Activated CD8-positive, alpha-beta T cell treated with anti-CD3 and anti-CD28 coated beads, Interleukin-2, amount 10 ng/mL, durations not matched to agents 7 days and 5 days (primary cell): ENCODE measurements at regions of chr1 and their contacts with region 1.

Region 1: DNA sequence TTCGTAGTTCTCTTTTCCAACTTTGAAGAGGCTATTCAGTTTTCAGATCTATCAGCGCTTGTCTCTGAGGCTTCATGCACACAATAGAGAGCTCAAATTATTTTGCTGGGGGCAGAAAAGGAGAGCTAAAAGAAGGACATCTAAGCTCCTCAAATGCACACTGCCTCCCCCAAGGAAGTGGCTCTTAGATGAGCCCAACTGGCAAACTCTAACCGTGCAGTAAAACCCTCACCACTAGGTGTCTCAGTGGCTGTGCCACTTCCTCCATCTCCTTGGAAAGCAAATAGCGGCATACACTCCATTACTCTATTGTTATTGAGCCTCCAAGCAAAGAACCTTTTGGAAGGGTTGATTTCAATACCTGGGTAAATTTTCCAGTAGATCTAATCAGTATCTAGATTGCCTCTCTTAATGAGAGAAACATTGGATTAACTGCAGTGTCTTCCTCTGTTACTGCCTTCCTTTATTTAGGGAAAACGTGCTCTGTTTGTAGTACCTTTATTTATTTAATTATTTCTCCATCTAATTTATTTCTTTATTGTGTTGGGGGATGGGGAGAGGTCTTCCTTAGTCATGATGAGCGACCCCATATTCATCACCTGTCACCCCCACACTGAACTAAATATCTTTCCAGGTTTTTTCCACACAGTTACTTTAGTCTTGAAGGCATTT is 9.2 kb upstream of the SFPQ start:
- DNase-seq: peak; percentile 84
- ATAC-seq: peak; percentile 99
- H3K4me3 Mint-ChIP-seq: no peak overlapping the region
- H3K27ac Mint-ChIP-seq: no peak overlapping the region
- H3K4me1 Mint-ChIP-seq: peaks cover 8% of the 10 kb centered on the region
- H3K27me3 Mint-ChIP-seq: peaks cover 9% of the 10 kb centered on the region

Region 2: GRCh38 chr1:35151220-35151619 is 51.0 kb before region 1 on chr1:
- CTCF ChIA-PET with region 1: no interaction called
- POLR2A ChIA-PET with region 1: no interaction called
- DNase-seq: no peak
- ATAC-seq: no peak
- H3K4me3 Mint-ChIP-seq: no peak overlapping the region
- H3K27ac Mint-ChIP-seq: no peak overlapping the region
- H3K4me1 Mint-ChIP-seq: peaks cover 5% of the 10 kb centered on the region
- H3K27me3 Mint-ChIP-seq: no peaks in the 10 kb centered on the region

Region 3: GRCh38 chr1:35220976-35221375 is 18.8 kb after region 1 on chr1:
- CTCF ChIA-PET with region 1: interaction called, 11 read pairs
- POLR2A ChIA-PET with region 1: no interaction called
- DNase-seq: peak; percentile 33
- ATAC-seq: peak; percentile 74
- H3K4me3 Mint-ChIP-seq: no peak overlapping the region
- H3K27ac Mint-ChIP-seq: no peak overlapping the region
- H3K4me1 Mint-ChIP-seq: no peaks in the 10 kb centered on the region
- H3K27me3 Mint-ChIP-seq: no peaks in the 10 kb centered on the region

Region 4: DNA sequence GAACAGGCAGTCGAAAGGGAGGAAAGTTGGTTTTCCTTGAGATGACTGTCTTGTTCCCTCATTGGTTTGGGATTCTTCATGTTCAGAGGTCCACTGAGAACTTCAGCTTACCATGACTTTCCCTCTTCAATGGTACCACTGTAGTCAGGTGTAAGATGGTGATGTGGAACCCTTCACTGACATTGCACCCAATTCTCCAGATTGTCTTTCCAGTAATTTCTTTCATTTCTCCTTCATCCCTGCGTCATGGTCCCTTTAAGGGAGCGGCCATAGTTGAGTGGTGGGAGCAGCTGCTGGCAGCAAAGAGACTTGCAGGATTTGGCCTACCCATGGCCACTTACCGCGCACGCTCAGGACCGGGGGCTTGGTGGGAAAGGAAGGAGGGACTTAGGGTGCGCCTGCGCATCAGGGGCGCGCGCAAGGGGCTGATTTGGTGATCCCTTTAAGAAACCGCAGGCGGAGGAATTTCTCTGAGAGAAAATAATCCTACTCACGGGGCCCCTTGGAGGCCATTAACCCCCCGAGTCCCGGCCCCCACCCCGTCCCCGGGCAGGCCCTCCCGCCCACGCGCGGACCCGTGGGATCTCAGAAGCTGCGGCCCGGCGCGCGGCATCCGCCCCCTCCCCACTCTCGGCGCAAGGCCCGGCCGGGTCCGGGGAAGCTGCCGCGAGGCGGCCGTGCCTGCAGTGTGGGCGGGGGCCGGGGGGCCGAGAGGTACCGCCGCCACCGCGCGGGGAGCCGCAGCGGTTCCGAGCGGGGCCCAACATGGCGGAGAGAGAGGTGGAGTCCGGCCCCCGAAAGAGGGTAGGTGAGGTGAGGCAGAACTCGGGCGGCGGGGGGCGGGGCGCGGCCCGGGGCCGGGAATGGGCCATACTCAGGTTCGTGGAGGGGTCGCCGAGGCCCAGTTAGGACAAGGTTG is 66.4 kb after region 1 on chr1 and contains the start of gene ZMYM4:
- CTCF ChIA-PET with region 1: interaction called, 10 read pairs
- POLR2A ChIA-PET with region 1: no interaction called
- DNase-seq: peak; percentile 93
- ATAC-seq: peak; percentile 97
- H3K4me3 Mint-ChIP-seq: peak within 1 kb of the TSS; percentile 82
- H3K27ac Mint-ChIP-seq: peak within 1 kb of the TSS; percentile 85
- H3K4me1 Mint-ChIP-seq: peaks cover 39% of the 10 kb centered on the region
- H3K27me3 Mint-ChIP-seq: peaks cover 5% of the 10 kb centered on the region
- total RNA-seq, gene ZMYM4: 29.5 to 29.6 TPM

Region 5: GRCh38 chr1:35298464-35298863 is 96.3 kb after region 1 on chr1:
- CTCF ChIA-PET with region 1: interaction called, 16 read pairs
- POLR2A ChIA-PET with region 1: no interaction called
- DNase-seq: peak; percentile 45
- ATAC-seq: peak; percentile 82
- H3K4me3 Mint-ChIP-seq: no peak overlapping the region
- H3K27ac Mint-ChIP-seq: peak overlapping the region; percentile 50
- H3K4me1 Mint-ChIP-seq: peaks cover 4% of the 10 kb centered on the region
- H3K27me3 Mint-ChIP-seq: no peaks in the 10 kb centered on the region